ENCODE measurements at regions of chr17 and their contacts with region 1.

Region 1: GRCh38 chr17:68205251-68205807 is 42.5 kb upstream of the AMZ2 start:
- DNase-seq: peak; percentile 90 to 95
- ATAC-seq: peak; percentile 91 to 95 (median 94)
- H3K4me3 ChIP-seq: peak overlapping the region; percentile 54 to 92 (median 82)
- H3K27ac ChIP-seq: peak overlapping the region; percentile 85 to 93 (median 90)
- H3K4me1 ChIP-seq: peaks cover 0 to 35% (median 18%) of the 10 kb centered on the region in 9 donors
- H3K27me3 ChIP-seq: peaks cover 0 to 17% (median under 1%) of the 10 kb centered on the region in 7 donors
- CTCF ChIP-seq: peak; percentile 79 to 98 (median 96)

Region 2: GRCh38 chr17:68057531-68057952 is 147.8 kb before region 1 on chr17:
- intact Hi-C with region 1: loop called in 1 of 10 experiments (anchors 10 kb)
- DNase-seq: no peak
- ATAC-seq: no peak
- H3K4me3 ChIP-seq: no peak overlapping the region
- H3K27ac ChIP-seq: no peak overlapping the region
- H3K4me1 ChIP-seq: peaks cover 0 to 37% (median 22%) of the 10 kb centered on the region in 9 donors
- H3K27me3 ChIP-seq: no peaks in the 10 kb centered on the region
- CTCF ChIP-seq: peak in 8 of 9 donors; percentile 24 to 63 (median 47)

Region 3: DNA sequence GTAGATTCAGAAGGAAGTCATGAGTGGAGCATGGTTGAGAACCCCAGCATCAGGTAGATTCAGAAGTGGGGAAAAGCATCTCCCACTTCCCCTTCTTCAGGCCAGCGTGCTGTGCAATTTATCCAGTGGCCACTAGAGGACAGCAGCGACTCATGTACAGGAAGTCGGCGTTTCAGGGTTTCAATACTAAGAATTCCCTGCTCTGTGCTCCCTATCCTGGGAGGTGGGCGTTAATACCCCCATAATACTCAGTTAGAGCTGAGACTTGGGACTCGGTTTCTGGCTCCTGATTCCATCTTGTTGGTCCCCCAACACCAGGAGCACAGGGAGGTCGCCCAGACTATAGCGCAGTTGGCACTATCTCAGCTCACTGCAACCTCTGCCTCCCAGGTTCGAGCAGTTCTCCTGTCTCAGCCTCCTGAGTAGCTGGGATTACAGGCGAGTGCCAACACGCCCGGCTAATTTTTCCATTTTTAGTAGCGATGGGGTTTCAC is 32.8 kb before region 1 on chr17:
- intact Hi-C with region 1: loop called in 4 of 10 experiments (anchors 1 to 5 kb)
- DNase-seq: peak; percentile 63 to 73
- ATAC-seq: peak; percentile 37 to 86 (median 74)
- H3K4me3 ChIP-seq: no peak overlapping the region
- H3K27ac ChIP-seq: no peak overlapping the region
- H3K4me1 ChIP-seq: peaks cover 0 to 4% (median 0%) of the 10 kb centered on the region in 9 donors
- H3K27me3 ChIP-seq: no peaks in the 10 kb centered on the region
- CTCF ChIP-seq: peak; percentile 93 to 99 (median 97)

Region 4: GRCh38 chr17:68221760-68222159 is 16.4 kb after region 1 on chr17:
- intact Hi-C with region 1: no loop called
- DNase-seq: no peak
- ATAC-seq: no peak
- H3K4me3 ChIP-seq: no peak overlapping the region
- H3K27ac ChIP-seq: no peak overlapping the region
- H3K4me1 ChIP-seq: peaks cover 0 to 2% (median 0%) of the 10 kb centered on the region in 9 donors
- H3K27me3 ChIP-seq: no peaks in the 10 kb centered on the region
- CTCF ChIP-seq: no peak

Region 5: GRCh38 chr17:68247445-68248198 is 42.3 kb after region 1 on chr17 and contains the start of gene AMZ2:
- intact Hi-C with region 1: loop called in 4 of 10 experiments (anchors 5 kb)
- DNase-seq: peak; percentile 93 to 97
- ATAC-seq: peak; percentile 98 to 100 (median 99)
- H3K4me3 ChIP-seq: peak within 1 kb of the TSS; percentile 61 to 91 (median 80)
- H3K27ac ChIP-seq: peak within 1 kb of the TSS; percentile 86 to 98 (median 97)
- H3K4me1 ChIP-seq: peaks cover 0 to 25% (median 13%) of the 10 kb centered on the region in 9 donors
- H3K27me3 ChIP-seq: no peaks in the 10 kb centered on the region
- CTCF ChIP-seq: peak in 2 of 9 donors; percentile 2 to 8
- total RNA-seq, gene AMZ2: 70.7 to 140 (median 111) TPM

Region 6: DNA sequence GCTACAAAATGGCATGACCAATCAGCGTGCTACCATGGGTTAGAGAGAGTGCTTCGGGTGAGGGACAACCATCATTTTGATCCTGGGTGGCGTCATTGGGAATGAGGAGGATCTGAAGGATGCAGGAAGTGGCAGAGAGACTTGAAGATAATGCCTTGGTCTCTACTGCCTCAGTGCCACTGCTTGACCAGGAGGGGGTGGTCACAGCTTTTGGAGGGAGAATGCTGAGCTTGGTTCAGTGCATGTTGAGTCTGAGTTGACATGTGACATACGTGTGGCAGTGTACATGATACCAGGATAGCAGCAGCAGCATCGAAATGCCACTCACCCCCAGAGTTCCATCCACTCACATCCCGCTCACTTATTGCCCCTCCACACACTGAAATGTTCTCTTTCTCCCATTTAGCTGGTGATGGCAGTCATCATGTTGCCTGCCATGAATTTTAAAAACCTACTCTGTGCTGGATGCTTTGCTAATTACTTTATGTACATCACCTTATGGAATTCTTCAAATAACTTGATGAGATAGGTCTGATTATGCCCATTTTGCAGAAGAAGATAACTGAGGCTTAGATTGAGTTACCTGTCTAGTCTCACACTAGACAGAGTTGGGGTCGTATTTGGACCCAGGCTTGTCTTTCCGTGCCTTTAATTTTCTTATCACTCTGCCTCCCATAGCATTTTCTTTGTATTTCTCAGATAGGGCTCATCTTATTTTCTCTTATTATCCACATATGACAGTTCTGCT is 122.7 kb after region 1 on chr17:
- intact Hi-C with region 1: no loop called
- DNase-seq: no peak
- ATAC-seq: no peak
- H3K4me3 ChIP-seq: no peak overlapping the region
- H3K27ac ChIP-seq: no peak overlapping the region
- H3K4me1 ChIP-seq: no peaks in the 10 kb centered on the region
- H3K27me3 ChIP-seq: no peaks in the 10 kb centered on the region
- CTCF ChIP-seq: no peak

Measured in heart right ventricle (tissue), 16 donors.